Heart right ventricle (tissue), 16 donors: ENCODE measurements at regions of chr5 and their contacts with region 1.

Region 1: DNA sequence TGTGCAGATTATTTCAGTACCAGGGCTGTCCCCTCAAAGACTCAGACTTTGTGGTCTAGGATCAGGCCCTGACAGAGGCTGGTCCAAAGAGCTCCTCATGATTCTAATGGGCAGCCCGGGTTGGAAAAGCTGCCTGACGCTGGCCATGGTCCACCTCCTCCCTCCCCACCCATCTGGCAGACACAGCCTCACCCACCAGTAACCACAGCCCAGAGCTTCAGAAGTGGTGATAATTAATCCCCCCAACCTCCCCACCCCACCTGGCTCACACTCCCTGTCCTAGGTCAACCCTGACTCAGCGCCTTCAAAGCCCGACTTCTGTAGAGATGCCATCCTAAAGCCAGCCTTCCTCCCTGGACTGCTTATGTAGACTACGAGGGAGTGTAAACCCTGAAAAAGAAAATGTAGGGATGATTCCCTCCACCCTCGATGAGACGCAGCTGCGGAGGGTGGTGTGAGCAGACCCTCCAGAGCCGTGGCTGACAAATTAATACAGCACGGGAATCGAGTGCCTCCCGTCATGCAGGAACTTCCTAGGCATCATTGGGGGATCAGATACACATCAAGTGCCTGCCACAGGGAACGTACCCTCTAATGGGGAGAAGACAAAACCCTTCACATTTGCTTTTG is 7.0 kb downstream of the UBE2QL1 start:
- DNase-seq: peak in 1 of 2 donors; percentile 54
- ATAC-seq: peak; percentile 20 to 72 (median 50)
- H3K4me3 ChIP-seq: peak overlapping the region in 1 of 10 donors; percentile 9
- H3K27ac ChIP-seq: peak overlapping the region; percentile 49 to 93 (median 82)
- H3K4me1 ChIP-seq: peaks cover 0 to 57% (median 31%) of the 10 kb centered on the region in 9 donors
- H3K27me3 ChIP-seq: peaks cover 0 to 37% (median 11%) of the 10 kb centered on the region in 7 donors
- CTCF ChIP-seq: no peak

Region 2: GRCh38 chr5:6435356-6435755 is 20.3 kb before region 1 on chr5:
- intact Hi-C with region 1: loop called in 1 of 10 experiments (anchors 1 kb)
- DNase-seq: no peak
- ATAC-seq: no peak
- H3K4me3 ChIP-seq: no peak overlapping the region
- H3K27ac ChIP-seq: no peak overlapping the region
- H3K4me1 ChIP-seq: peaks cover 0 to 21% (median 6%) of the 10 kb centered on the region in 9 donors
- H3K27me3 ChIP-seq: peaks cover 0 to 15% (median 0%) of the 10 kb centered on the region in 7 donors
- CTCF ChIP-seq: peak in 7 of 9 donors; percentile 20 to 46 (median 34)